Cardiac septum (tissue), 1 donor: ENCODE measurements at regions of chr10 and their contacts with region 1.

Region 1: GRCh38 chr10:60434418-60435046 is 44.9 kb upstream of the ANK3 start:
- DNase-seq: no peak

Region 2: DNA sequence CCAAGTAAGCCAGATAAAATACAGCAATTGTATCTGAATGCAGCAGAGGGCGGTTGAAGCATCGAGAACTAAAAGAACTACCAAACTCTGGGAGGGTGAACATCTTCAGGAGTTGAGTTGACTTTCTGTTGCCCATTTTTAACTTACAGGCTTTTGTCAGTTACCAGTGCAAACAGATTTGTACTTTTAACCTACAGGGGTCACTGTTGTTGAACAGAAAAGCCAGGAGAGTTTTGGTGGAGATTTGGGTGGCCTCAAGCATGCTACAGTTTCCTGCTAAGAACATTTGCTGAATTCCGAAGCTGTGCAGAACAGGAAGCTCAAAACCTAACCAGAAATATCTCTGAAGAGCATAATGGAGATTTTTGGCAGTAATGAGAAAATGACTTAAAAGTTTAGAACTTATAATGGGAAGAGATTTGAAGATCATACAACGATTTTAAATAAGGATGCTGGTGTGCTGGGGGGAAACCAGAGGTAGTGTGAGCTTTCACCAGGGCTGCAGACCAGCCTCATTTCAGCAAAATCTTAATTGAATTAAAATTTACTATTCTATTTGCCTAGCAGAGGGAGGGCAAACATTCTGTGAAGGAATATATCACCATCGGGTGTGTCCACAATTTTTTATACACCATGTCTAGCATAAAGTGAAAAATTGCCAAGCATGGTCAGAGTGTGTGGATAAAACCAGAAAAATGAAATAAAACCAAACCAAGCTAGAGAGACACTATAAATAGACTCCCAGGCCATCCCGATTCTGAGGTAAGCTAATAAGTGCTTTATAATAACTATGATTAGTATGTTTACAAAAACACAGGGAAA is 319.6 kb before region 1 on chr10:
- intact Hi-C with region 1: loop called (anchors 10 kb)
- DNase-seq: no peak

Region 3: DNA sequence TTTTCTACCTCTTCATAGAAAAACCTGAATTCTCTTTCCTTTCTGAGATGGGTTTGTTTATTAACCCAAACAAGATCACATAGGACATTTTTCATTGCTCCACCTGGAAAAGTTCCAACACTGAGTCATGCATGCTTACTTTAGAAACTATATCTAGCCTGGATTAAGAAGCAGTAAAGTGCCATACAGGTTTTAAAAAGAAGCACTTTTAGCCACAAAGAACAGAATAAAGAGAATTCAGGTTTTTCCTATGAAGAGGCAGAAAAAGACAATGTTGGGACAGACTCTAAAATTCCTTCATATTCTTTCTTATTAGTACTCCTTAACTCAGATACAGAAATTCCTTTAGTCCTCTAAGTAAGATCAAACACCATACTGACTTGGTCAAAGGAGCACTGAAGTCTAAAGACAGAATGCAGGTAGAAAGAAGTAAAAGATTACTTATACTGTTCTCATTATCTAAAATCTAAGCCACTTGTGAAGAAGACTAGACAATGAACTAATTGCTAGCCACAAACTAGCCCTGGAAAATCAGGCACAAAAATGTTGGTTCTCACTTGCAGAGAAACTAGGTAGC is 286.2 kb before region 1 on chr10:
- intact Hi-C with region 1: no loop called
- DNase-seq: no peak

Region 4: GRCh38 chr10:60208676-60209269 is 225.8 kb before region 1 on chr10:
- intact Hi-C with region 1: loop called (anchors 10 kb)
- DNase-seq: no peak